ENCODE measurements at regions of chr11 and their contacts with region 1.

Region 1: GRCh38 chr11:114180301-114181055 is 115.7 kb upstream of the NNMT start:
- DNase-seq: no peak
- ATAC-seq: peak; percentile 35

Region 2: GRCh38 chr11:114036156-114036811 is 144.2 kb before region 1 on chr11:
- intact Hi-C with region 1: loop called (anchors 2 kb)
- DNase-seq: peak; percentile 94
- ATAC-seq: peak; percentile 96

Region 3: DNA sequence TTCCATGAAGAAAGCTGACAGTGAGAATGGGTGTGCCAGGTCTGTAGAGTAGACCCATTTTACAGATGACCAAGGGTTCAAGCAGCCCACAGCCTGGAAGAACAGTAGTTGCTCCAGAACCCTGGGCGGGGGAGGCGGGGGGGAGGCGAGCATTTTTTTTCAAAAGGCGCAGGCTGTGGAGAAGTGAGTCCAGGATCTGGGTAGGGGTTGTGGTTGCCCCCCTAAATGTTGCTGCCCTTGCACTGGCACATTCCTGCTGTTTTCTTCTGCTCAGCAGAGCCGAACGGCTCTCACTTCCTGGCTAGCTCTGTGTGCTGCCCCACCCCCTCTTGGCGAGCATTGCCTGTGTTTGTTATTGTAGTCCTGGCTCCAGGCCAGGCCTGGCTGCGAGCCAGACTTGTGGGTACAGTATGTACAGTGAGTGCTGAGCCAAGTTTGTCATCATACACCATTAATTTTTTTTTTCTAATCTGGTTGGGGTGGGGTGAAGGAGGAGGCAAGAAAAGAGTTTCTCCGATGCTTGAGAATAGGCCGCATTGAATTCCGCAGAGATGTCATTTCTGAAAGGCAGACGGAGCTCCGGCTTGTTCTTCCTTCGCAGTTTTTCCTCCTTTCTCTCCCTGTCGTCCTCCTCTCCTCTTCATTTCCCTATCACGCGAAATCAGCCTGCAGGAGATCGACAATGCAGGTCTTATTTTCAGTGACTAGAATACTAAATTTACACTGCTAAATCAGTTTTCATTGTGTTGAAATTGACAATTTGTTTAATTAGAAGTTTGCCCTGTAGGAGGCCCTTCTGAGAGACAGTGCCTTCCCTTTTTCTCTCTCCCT is 20.5 kb before region 1 on chr11:
- intact Hi-C with region 1: loop called (anchors 1 kb)
- DNase-seq: peak; percentile 100
- ATAC-seq: peak; percentile 55

Region 4: GRCh38 chr11:114197799-114198500 is 17.5 kb after region 1 on chr11:
- intact Hi-C with region 1: loop called (anchors 2 kb)
- DNase-seq: peak; percentile 76
- ATAC-seq: peak; percentile 77

Region 5: DNA sequence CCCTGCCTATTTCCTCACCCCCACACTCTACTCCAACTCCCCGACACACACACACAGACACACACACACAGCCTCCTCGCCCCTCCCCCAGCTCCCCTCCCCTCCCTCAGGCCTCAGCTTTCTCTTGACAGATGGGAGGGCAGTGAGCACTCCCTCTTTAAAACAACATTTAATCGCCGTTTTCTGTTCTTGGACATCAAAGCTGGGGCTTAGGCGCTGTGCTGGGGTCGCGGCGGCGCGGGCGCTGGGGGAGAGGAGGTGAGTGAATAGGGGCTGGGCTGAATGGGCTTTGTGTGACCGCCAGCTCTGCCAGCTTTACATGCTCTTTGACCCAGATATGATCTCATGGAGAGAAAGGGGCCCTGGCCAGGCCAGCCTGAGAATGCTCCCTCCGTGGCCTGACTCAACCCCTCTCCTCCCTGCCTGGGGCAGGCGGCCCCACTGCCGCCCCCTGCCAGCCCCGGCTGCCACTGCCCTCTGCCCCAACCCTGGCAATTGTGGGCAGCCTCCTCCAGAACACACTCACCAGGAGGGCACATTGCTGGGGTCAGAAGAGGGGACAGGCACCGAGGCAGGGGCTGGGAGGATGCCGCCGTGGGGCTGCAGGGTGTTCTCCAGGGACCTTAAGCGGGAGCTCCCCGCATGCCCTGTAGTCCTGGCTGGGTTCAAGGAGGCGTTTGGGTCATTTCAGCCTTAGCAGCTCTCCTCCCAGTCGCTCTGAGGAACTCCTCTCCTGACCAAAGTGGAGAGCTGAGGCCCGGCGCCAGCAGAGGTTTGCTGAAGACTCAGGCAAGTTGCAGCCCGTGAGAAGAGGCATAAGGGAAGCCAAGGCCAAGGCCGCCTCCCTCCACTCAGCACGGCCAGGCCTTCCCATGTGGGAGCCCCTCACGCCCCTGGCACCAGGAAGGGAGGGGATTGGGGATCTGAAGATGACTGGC is 77.4 kb after region 1 on chr11:
- intact Hi-C with region 1: loop called (anchors 5 kb)
- DNase-seq: peak; percentile 90
- ATAC-seq: peak; percentile 37

Measured in Right ventricle myocardium inferior (tissue), 1 donor.